Natural killer cell (primary cell): ENCODE measurements at regions of chr4 and their contacts with region 1.

Region 1: GRCh38 chr4:17544205-17544604 is 29.2 kb downstream of the CLRN2 start:
- DNase-seq: no peak
- ATAC-seq: no peak
- H3K4me3 ChIP-seq: no peak overlapping the region
- H3K4me3 Mint-ChIP-seq: no peak overlapping the region
- H3K27ac ChIP-seq: no peak overlapping the region
- H3K27ac Mint-ChIP-seq: no peak overlapping the region
- H3K4me1 ChIP-seq: no peaks in the 10 kb centered on the region
- H3K4me1 Mint-ChIP-seq: peaks cover 1 to 3% of the 10 kb centered on the region in 2 donors
- H3K27me3 ChIP-seq: no peaks in the 10 kb centered on the region
- H3K27me3 Mint-ChIP-seq: peaks cover 18 to 37% of the 10 kb centered on the region in 2 donors
- CTCF ChIP-seq: no peak

Region 2: GRCh38 chr4:17397611-17398010 is 146.6 kb before region 1 on chr4:
- intact Hi-C with region 1: no loop called
- DNase-seq: no peak
- ATAC-seq: no peak
- H3K4me3 ChIP-seq: no peak overlapping the region
- H3K4me3 Mint-ChIP-seq: no peak overlapping the region
- H3K27ac ChIP-seq: no peak overlapping the region
- H3K27ac Mint-ChIP-seq: no peak overlapping the region
- H3K4me1 ChIP-seq: no peaks in the 10 kb centered on the region
- H3K4me1 Mint-ChIP-seq: no peaks in the 10 kb centered on the region
- H3K27me3 ChIP-seq: no peaks in the 10 kb centered on the region
- H3K27me3 Mint-ChIP-seq: peaks cover 7 to 17% of the 10 kb centered on the region in 2 donors
- CTCF ChIP-seq: no peak

Region 3: GRCh38 chr4:17636696-17637622 is 92.8 kb after region 1 on chr4:
- intact Hi-C with region 1: loop called (anchors 1 kb)
- DNase-seq: peak; percentile 67 to 83
- ATAC-seq: peak; percentile 79 to 91 (median 89)
- H3K4me3 ChIP-seq: no peak overlapping the region
- H3K4me3 Mint-ChIP-seq: no peak overlapping the region
- H3K27ac ChIP-seq: no peak overlapping the region
- H3K27ac Mint-ChIP-seq: peak overlapping the region; percentile 29 to 45
- H3K4me1 ChIP-seq: no peaks in the 10 kb centered on the region
- H3K4me1 Mint-ChIP-seq: no peaks in the 10 kb centered on the region
- H3K27me3 ChIP-seq: no peaks in the 10 kb centered on the region
- H3K27me3 Mint-ChIP-seq: no peaks in the 10 kb centered on the region
- CTCF ChIP-seq: peak; percentile 89